Activated naive CD4-positive, alpha-beta T cell treated with anti-CD3 and anti-CD28 coated beads for 36 hours (primary cell): ENCODE measurements at regions of chr17 and their contacts with region 1.

Region 1: DNA sequence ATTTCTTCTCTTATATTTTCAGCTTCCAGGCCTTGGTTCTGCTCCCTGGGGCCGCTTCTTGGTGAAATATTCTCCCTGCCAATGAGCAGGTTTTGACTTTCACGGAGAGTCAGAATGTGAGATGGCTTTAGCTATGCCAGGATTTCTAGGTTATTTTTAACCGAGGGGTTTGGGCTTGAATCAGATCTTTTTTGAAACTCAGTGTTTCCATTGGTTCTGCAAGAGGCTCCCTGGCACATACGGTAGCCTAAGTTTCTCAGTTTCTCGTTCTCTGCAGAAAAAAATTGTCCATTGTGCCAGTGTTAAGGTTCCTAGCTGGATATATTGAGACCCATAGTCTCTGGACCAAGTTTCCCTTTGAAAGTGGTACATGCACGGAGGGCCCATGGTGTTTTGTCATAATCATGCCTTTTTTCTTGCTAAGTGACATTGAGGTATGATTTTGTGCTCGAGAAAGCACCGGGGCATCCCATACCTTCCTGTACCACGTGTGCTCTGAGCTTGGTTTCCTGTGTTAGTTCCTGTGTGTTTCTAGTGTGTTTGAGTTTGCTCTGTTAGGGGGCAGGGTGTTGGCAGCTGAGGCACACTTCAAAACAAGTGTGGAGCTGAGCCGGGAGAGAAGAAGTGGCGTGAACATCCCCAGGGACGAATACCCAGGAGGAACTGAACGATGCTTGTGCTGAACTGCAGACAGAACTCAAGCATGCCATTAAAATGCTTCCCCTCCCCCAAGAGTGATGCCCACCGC is 127.2 kb downstream of the HS3ST3B1 start:
- DNase-seq: peak; percentile 78
- H3K4me3 Mint-ChIP-seq: peak overlapping the region; percentile 56
- H3K27ac Mint-ChIP-seq: peak overlapping the region; percentile 78
- H3K4me1 Mint-ChIP-seq: peaks cover 60% of the 10 kb centered on the region
- H3K27me3 Mint-ChIP-seq: no peaks in the 10 kb centered on the region

Region 2: DNA sequence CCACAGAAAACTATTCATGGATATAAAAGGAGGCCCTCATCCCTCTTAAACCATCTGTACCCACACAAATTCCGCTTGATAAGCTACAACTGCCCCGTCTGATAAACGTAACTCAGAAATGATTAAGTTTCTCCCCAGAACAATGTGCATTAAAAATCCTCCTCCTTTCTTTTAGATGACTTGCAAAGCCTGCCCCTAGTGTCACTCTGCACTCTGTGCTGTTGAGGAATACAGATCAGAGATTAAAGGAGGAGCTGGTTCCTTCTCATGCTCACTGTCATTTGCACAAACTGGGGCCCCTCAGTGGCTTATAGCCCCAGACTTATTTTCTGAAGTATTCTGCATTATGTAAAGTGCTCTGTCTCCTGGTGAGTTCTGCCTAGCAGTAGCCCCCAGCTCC is 224.7 kb before region 1 on chr17:
- CTCF ChIA-PET with region 1: no interaction called
- intact Hi-C with region 1: loop called (anchors 2 kb)
- DNase-seq: peak; percentile 67
- H3K4me3 Mint-ChIP-seq: no peak overlapping the region
- H3K27ac Mint-ChIP-seq: peak overlapping the region; percentile 94
- H3K4me1 Mint-ChIP-seq: peaks cover 85% of the 10 kb centered on the region
- H3K27me3 Mint-ChIP-seq: no peaks in the 10 kb centered on the region

Region 3: DNA sequence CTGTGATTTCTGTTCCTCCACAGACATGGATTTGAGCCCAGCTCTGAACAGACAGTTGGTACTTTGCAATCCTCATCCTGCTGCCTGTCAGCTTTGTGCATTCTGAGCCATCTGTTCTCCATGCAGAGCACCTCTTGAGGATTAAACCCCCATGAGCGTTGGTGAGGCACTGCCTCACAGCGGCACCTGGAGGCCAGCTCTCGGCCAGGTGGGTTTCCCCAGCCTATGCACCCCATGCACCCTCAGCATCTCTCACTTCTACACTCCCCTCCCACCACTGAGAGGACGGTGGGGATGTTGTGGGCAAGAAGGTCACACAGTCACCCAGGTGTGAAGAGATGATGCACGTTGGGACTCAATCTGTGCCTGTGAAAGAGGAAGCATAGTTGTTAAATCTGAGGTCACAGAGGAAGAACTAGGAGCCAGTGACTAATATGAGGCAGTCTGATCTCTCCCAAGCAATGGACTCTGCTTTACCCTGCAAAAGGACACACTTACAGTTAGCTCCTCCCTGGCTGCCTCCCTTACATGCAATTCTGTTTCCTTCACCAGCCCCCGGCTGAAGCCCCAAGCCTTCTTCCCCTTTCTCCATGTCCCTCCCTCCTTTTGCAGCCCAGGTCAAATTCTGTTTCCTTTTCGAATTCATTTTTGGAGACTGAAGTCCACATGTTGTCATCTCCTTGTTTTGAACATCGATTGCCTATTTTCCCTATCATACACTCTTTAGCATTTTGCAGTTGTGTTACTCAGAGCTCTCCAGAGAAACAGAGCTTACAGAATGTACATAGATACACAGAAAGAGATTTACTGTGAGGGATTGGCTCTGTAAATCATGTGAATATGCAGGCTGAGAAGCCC is 68.7 kb before region 1 on chr17:
- CTCF ChIA-PET with region 1: no interaction called
- intact Hi-C with region 1: loop called (anchors 5 kb)
- DNase-seq: peak; percentile 61
- H3K4me3 Mint-ChIP-seq: no peak overlapping the region
- H3K27ac Mint-ChIP-seq: no peak overlapping the region
- H3K4me1 Mint-ChIP-seq: peaks cover 15% of the 10 kb centered on the region
- H3K27me3 Mint-ChIP-seq: no peaks in the 10 kb centered on the region

Region 4: GRCh38 chr17:14409292-14409691 is 18.8 kb before region 1 on chr17:
- CTCF ChIA-PET with region 1: interaction called, 11 read pairs
- intact Hi-C with region 1: loop called (anchors 1 kb)
- DNase-seq: no peak
- H3K4me3 Mint-ChIP-seq: no peak overlapping the region
- H3K27ac Mint-ChIP-seq: no peak overlapping the region
- H3K4me1 Mint-ChIP-seq: peaks cover 12% of the 10 kb centered on the region
- H3K27me3 Mint-ChIP-seq: no peaks in the 10 kb centered on the region